Activated CD4-positive, alpha-beta memory T cell treated with anti-CD3 and anti-CD28 coated beads, Interleukin-2, amount 10 ng/mL, durations not matched to agents 7 days and 5 days (primary cell): ENCODE measurements at regions of chr14 and their contacts with region 1.

Region 1: DNA sequence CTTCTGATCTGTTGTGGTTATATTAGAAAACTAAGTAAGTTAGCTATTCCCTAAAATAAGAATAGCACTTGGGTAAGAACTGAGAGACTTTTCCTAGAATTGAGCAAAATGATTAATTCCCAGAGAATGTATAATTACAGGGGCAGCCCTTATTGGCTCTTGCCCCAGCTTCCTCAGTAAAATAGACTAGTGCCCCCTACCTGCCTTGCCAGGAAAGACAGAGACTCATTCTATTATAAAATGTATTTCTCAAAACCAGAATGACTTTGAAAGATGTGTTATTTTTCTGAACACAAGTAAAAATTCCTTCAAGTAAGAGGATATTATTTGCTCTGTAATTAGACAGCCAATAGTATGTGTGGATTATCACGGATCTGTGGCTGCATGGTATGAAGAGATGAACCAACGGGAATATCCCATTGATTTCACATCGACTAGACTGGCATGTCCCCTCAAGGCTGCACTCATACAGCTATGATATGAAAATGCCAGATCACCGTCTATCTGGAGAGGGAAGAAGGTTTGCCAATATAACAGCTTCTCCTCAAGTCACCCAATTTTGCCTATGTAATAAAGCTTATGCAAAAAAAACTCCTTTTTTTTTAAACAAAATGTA is 7.4 kb upstream of the GLRX5 start:
- DNase-seq: peak; percentile 58
- H3K4me3 Mint-ChIP-seq: no peak overlapping the region
- H3K27ac Mint-ChIP-seq: peak overlapping the region; percentile 70
- H3K4me1 Mint-ChIP-seq: peaks cover 82% of the 10 kb centered on the region
- H3K27me3 Mint-ChIP-seq: no peaks in the 10 kb centered on the region

Region 2: DNA sequence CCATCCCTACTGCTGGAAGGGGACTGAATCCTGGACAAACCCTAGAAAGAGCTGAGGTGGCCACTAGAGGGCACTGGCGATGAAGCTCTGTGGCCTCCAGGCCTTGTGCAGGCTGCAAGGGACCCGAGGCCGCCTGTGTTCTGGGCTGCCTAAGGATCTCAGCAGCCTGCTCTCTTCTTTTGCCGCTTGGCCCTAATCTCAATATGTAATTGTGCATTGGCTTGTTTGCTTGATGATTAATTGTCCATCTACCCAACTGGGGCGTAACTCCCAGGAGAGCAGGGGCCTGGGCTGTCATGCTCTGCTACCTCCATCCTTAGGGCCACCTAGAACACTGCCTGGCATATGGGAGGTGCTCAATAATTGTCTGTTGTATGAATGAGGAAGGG is 84.9 kb before region 1 on chr14:
- CTCF ChIA-PET with region 1: interaction called, 26 read pairs
- POLR2A ChIA-PET with region 1: interaction called, 23 read pairs
- DNase-seq: peak; percentile 75
- H3K4me3 Mint-ChIP-seq: no peak overlapping the region
- H3K27ac Mint-ChIP-seq: no peak overlapping the region
- H3K4me1 Mint-ChIP-seq: peaks cover 3% of the 10 kb centered on the region
- H3K27me3 Mint-ChIP-seq: no peaks in the 10 kb centered on the region

Region 3: DNA sequence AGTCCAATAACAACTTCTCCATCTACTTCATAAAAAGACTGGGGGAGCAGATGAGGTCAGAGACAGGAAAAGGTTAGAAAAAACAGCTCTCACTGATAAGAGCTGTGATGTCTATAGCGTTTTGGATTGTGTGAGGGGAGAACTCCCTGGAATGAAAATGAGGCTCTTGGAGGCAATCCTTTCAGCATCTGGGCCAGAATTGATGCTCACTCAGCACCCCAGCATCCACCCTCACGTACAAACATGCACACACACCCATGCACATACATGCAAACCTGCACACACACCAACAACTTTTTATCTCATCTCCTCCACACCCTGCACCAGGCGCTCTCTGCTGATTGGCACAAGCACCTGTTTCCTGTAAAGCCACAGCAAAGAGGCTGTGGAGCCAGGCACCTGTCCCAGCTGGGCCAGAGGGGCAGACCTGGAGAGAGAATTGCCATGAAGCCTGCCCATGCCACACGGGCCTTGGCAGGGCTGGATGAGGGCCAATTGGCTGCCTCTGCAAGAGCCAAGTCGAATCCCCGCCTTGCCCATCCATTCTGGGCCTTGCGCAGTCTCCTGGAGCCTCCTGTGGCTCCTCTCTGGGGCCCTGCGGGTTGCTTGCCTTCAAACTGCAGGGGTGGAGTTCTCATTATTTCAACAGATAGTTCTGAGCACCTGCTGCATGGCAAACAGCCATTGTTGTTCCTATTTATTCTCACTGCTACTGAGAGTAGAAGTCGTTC is 64.2 kb before region 1 on chr14:
- CTCF ChIA-PET with region 1: interaction called, 17 read pairs
- POLR2A ChIA-PET with region 1: interaction called, 9 read pairs
- DNase-seq: peak; percentile 34
- H3K4me3 Mint-ChIP-seq: no peak overlapping the region
- H3K27ac Mint-ChIP-seq: peak overlapping the region; percentile 86
- H3K4me1 Mint-ChIP-seq: peaks cover 35% of the 10 kb centered on the region
- H3K27me3 Mint-ChIP-seq: no peaks in the 10 kb centered on the region

Region 4: DNA sequence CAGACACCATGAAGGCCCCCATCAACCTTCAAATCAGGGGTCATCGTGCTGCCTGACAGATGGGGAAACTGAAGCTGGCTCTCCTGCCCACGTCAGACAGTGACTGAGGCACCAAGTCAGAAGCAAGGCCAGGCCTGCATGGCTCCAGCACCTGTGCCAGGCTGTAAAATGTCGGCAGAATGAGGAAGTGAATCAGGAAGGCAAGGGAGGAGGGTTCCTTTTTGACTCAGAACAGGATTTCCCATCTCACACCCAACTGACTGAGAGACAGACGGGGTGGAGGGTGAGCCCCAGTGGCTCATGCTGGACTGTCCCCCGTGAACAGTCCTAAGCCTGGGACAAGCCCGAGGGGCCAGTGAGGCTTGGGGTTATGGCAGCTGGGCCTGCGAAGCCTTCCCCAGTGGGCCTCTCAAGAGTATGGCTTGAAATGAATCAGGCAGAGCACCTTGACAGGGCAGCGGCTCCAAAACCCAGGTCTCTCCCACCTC is 31.9 kb before region 1 on chr14:
- CTCF ChIA-PET with region 1: interaction called, 17 read pairs
- POLR2A ChIA-PET with region 1: interaction called, 30 read pairs
- DNase-seq: peak; percentile 41
- H3K4me3 Mint-ChIP-seq: peak overlapping the region; percentile 36
- H3K27ac Mint-ChIP-seq: peak overlapping the region; percentile 88
- H3K4me1 Mint-ChIP-seq: peaks cover 77% of the 10 kb centered on the region
- H3K27me3 Mint-ChIP-seq: no peaks in the 10 kb centered on the region

Region 5: DNA sequence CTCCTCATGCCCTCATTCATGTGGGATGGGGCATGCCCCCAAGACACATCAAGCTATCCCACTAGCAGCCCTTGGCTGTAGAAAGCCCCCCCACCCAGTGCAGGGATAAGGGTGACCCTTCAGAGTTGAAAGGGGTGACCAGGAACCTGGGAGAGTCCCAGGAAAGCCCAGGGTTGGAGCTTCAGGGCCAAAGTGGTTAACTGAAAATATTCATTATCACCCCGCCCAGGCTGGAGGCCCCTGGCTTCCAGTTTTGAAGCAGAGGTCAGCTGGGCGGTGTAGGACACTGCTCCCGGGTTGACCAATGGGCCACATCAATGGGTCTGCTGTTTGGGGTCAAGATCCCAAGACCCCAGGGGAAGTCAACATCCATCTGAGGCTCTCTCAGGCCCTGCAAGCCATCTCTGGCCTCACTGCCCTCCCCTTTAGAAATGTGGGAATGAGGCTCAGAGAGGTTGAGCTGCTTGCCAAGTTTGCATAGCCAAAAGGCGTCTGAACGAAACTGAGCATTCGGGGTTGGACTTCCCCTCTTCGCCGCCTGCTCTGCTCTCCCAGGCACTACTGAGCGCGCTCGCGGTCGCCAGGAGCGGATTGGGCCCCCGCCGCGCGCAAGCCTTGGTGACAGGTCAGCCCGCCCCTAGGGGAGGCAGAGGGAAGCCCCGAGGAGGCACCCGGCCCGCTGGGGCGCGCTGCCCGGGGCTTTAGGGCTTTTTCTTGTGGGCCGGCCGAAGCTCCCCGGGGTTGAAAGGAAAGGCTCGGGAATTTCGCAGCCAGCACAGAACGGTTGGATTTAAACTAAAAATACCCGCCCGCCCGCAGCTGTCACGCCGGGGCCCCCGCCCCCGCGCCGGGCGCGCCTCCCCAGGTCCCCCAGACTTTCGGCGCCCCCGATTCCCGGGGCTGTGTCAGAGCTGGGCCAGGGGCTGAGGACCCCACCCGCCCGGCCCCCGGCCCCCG is 11.6 kb before region 1 on chr14:
- CTCF ChIA-PET with region 1: interaction called, 118 read pairs
- POLR2A ChIA-PET with region 1: interaction called, 199 read pairs
- DNase-seq: peak; percentile 86
- H3K4me3 Mint-ChIP-seq: peak overlapping the region; percentile 92
- H3K27ac Mint-ChIP-seq: peak overlapping the region; percentile 87
- H3K4me1 Mint-ChIP-seq: peaks cover 77% of the 10 kb centered on the region
- H3K27me3 Mint-ChIP-seq: no peaks in the 10 kb centered on the region